AG04449 (cell line): ENCODE measurements at regions of chr17 and their contacts with region 1.

Region 1: DNA sequence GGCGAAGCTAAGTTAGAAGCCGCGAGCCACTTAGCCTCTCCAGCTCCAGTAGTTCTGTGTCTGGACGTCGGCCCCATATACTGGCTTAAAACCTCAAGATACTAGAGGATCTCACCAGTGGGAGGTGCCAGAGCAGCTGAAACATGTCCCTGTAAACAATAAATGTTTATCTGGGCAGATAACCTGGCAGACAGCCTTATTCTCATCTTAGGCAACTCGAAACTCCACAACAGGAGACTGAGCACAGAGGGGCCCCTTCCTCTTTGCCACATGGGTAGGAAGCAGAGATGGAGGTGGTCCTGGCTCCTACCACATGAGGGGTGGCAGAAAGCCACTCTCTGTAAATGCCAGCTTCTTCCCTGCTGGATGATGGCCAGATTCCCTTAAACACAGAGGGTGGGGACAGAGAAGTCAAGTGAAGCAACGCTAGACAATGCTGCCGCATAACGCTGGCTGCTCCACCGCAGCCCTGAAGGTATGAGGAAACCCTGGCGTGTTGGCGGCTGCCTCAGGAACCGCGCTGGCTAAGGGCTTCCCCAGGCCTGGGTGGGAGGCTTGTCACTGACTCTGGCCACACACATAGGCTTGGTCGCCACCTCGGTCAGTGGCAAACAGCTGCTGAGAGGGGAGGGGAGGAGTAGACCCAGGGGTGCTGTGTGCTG is 67.9 kb downstream of the HIC1 start:
- DNase-seq: no peak
- H3K4me3 ChIP-seq: no peak overlapping the region
- CTCF ChIP-seq: no peak

Region 2: GRCh38 chr17:2111719-2112118 is 11.1 kb before region 1 on chr17:
- CTCF ChIA-PET with region 1: interaction called, 15 read pairs
- POLR2A ChIA-PET with region 1: no interaction called
- DNase-seq: peak; percentile 90
- H3K4me3 ChIP-seq: no peak overlapping the region
- CTCF ChIP-seq: no peak

Region 3: DNA sequence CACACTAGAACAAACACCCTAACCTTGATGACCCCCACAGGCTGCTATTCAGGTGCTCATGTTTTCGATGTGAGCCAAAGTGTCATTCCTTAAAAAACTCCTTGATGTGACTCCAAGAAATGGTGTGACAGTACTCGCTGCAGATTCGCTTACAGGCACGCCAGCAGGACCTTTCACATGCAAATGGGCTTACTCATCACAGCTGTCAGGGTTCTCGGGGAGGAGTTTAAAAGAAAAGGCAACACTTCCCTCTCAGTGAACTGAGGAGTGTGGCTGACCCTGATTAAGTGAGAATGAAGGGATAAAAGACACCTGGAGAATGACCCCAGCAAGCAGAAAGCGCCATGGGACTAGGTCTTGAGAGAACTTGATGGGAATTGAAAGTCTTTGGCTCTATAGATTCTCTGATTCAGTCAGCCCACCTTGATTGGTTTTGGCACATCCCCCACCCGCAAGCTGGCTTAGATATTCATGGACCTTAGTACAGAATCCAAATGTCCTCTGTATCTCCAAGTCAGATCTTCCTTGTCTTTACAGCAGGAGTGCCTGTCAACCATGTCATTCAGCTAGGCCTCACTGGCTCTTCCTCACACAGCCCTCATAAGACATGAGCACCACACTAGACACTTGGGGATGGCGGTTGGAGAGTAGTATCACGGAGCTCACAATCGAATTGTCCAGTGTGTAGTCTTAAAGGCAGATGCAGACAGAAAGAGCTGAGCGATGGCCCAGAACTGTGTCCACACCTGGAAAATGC is 14.7 kb after region 1 on chr17:
- CTCF ChIA-PET with region 1: interaction called, 71 read pairs
- POLR2A ChIA-PET with region 1: no interaction called
- DNase-seq: no peak
- H3K4me3 ChIP-seq: no peak overlapping the region
- CTCF ChIP-seq: no peak

Region 4: DNA sequence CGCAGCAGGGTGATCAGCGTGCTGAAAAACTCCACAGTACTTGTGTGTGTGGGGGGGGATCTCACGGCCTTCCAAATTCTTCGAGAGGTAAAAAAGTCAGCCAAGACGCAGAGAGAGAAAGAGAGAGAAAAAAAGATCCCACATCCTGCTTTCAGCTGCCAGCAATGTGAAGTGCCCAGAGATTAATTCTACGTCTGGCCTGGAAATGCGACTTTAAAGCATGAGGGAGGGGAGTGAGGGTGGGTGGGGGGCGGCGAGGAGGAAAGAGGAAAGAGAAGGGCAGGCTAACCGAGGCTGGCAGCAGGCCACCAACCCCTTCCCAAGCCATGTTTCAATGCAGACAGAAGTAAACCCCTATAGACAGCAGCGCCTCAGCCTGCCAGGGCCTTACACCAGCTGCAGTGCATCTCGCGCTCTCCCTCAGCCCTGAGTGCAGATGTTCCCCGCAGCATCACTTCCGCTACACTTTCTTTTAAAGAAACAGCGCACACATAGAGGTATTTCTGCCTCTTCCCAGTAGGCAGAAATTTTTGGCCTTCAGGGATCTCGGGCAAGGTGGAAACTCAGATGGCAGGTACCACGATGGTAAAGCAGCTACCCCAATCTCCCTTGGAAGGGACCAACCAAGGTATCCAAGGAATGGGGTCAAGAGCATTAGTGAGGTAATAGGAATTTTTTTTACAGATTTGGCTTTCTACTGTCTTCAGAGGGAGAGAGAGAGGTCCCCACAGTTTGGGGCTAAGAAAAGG is 93.0 kb after region 1 on chr17:
- CTCF ChIA-PET with region 1: no interaction called
- POLR2A ChIA-PET with region 1: no interaction called
- DNase-seq: no peak
- H3K4me3 ChIP-seq: peak overlapping the region; percentile 42
- CTCF ChIP-seq: no peak